Natural killer cell (primary cell): ENCODE measurements at regions of chr15 and their contacts with region 1.

Region 1: GRCh38 chr15:90037961-90038631 is 37.0 kb downstream of the ZNF710 start:
- DNase-seq: peak; percentile 47 to 77
- ATAC-seq: peak; percentile 53 to 71 (median 59)
- H3K4me3 ChIP-seq: no peak overlapping the region
- H3K4me3 Mint-ChIP-seq: peak overlapping the region; percentile 65
- H3K27ac ChIP-seq: peak overlapping the region; percentile 30
- H3K27ac Mint-ChIP-seq: peak overlapping the region; percentile 88 to 92
- H3K4me1 ChIP-seq: peaks cover 65% of the 10 kb centered on the region
- H3K4me1 Mint-ChIP-seq: peaks cover 75% of the 10 kb centered on the region in 2 donors
- H3K27me3 ChIP-seq: no peaks in the 10 kb centered on the region
- H3K27me3 Mint-ChIP-seq: no peaks in the 10 kb centered on the region
- CTCF ChIP-seq: no peak

Region 2: GRCh38 chr15:89599021-89599420 is 439.1 kb before region 1 on chr15:
- intact Hi-C with region 1: no loop called
- DNase-seq: no peak
- ATAC-seq: no peak
- H3K4me3 ChIP-seq: no peak overlapping the region
- H3K4me3 Mint-ChIP-seq: no peak overlapping the region
- H3K27ac ChIP-seq: no peak overlapping the region
- H3K27ac Mint-ChIP-seq: no peak overlapping the region
- H3K4me1 ChIP-seq: no peaks in the 10 kb centered on the region
- H3K4me1 Mint-ChIP-seq: no peaks in the 10 kb centered on the region
- H3K27me3 ChIP-seq: no peaks in the 10 kb centered on the region
- H3K27me3 Mint-ChIP-seq: no peaks in the 10 kb centered on the region
- CTCF ChIP-seq: no peak

Region 3: DNA sequence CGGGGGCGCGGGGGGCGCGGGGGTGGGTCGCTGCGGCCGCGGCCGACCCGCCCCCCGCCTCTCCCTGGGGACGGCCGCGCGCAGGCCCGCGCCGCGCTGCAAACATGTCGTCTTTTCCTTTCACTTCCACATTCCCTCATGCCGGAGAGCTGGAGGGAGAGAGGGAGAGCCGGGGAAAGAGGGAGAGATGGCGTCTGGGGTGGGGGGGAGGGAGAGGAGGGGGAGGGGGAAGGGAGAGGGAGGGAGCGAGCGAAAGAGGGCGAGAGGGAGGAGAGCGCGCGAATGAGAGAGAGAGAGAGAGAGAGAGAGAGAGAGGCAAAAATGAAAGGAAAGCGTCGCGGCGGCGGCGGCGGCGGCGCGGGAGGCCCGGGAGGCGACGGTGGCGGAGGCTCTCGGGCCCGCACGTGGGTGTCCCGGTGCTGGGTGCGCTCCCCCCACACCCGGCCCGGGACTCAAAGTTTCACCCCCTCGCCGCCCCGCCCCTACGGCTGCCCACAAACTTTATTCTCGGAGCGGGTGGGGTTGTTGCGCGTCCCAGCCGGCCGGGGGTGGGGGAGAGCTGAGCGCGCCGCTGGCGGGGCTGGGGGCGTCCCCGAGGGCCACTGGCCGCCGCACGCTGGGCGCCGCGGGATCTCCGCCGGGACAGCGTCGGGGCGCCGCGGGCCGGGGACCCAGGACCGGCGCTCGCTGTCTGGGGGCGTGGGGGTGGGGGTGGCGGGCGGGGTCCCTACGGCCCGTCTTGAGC is 36.2 kb before region 1 on chr15:
- intact Hi-C with region 1: loop called (anchors 2 kb)
- DNase-seq: peak; percentile 61 to 77
- ATAC-seq: peak; percentile 59 to 70 (median 66)
- H3K4me3 ChIP-seq: peak overlapping the region; percentile 51
- H3K4me3 Mint-ChIP-seq: peak overlapping the region; percentile 96
- H3K27ac ChIP-seq: peak overlapping the region; percentile 70
- H3K27ac Mint-ChIP-seq: peak overlapping the region; percentile 94
- H3K4me1 ChIP-seq: peaks cover 46% of the 10 kb centered on the region
- H3K4me1 Mint-ChIP-seq: peaks cover 60 to 64% of the 10 kb centered on the region in 2 donors
- H3K27me3 ChIP-seq: no peaks in the 10 kb centered on the region
- H3K27me3 Mint-ChIP-seq: peaks cover 0 to 6% of the 10 kb centered on the region in 2 donors
- CTCF ChIP-seq: no peak

Region 4: DNA sequence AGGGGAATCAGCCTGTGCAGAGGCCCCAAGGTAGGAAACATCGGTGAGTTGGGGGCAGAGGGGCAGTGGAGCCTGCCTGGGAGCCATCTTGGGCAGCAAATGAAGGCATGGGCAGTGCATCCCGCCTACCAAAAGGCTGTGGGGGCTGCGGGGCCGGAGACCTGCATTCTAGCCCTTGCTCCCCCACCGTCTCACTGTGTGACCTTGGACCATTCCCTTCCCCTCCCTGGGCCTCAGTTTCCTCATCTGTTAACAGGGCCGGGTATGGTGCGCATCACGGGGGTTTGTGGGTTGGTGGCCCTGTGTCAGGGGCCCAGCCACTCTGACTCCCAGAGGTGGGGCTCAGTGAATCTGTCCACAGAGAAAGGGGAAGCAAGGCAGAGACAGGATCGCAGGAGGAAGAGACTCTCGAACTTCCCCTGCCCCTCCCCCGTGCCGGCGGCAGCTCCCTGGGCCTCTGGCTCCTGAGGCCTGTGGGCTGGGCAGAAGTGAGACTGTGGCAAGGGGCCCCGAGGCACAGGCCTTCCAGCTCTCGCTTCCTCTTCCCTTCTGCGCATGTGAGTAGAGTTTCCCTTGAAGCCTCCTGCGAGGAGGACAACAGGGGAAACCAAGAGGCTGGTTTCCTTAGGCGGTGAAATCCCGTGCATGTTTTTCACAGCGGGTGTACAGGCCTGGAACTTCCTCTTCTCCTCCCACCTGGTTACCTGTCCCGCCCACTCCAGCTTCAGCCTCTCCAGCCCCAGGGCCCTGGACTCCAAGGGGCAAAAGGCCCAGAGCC is 21.3 kb after region 1 on chr15:
- intact Hi-C with region 1: loop called (anchors 2 kb)
- DNase-seq: peak; percentile 59 to 86
- ATAC-seq: peak; percentile 84 to 93 (median 93)
- H3K4me3 ChIP-seq: no peak overlapping the region
- H3K4me3 Mint-ChIP-seq: peak overlapping the region; percentile 60
- H3K27ac ChIP-seq: peak overlapping the region; percentile 84
- H3K27ac Mint-ChIP-seq: peak overlapping the region; percentile 89 to 93
- H3K4me1 ChIP-seq: peaks cover 71% of the 10 kb centered on the region
- H3K4me1 Mint-ChIP-seq: peaks cover 36 to 53% of the 10 kb centered on the region in 2 donors
- H3K27me3 ChIP-seq: no peaks in the 10 kb centered on the region
- H3K27me3 Mint-ChIP-seq: no peaks in the 10 kb centered on the region
- CTCF ChIP-seq: no peak

Region 5: GRCh38 chr15:90099868-90100831 is 62.1 kb after region 1 on chr15:
- intact Hi-C with region 1: loop called (anchors 2 kb)
- DNase-seq: peak in 1 of 2 donors; percentile 65
- ATAC-seq: no peak
- H3K4me3 ChIP-seq: no peak overlapping the region
- H3K4me3 Mint-ChIP-seq: peak overlapping the region; percentile 90
- H3K27ac ChIP-seq: peak overlapping the region; percentile 90
- H3K27ac Mint-ChIP-seq: peak overlapping the region; percentile 94 to 100
- H3K4me1 ChIP-seq: peaks cover 69% of the 10 kb centered on the region
- H3K4me1 Mint-ChIP-seq: peaks cover 70 to 72% of the 10 kb centered on the region in 2 donors
- H3K27me3 ChIP-seq: no peaks in the 10 kb centered on the region
- H3K27me3 Mint-ChIP-seq: no peaks in the 10 kb centered on the region
- CTCF ChIP-seq: no peak